RWPE1 (cell line): ENCODE measurements at regions of chr4 and their contacts with region 1.

Region 1: DNA sequence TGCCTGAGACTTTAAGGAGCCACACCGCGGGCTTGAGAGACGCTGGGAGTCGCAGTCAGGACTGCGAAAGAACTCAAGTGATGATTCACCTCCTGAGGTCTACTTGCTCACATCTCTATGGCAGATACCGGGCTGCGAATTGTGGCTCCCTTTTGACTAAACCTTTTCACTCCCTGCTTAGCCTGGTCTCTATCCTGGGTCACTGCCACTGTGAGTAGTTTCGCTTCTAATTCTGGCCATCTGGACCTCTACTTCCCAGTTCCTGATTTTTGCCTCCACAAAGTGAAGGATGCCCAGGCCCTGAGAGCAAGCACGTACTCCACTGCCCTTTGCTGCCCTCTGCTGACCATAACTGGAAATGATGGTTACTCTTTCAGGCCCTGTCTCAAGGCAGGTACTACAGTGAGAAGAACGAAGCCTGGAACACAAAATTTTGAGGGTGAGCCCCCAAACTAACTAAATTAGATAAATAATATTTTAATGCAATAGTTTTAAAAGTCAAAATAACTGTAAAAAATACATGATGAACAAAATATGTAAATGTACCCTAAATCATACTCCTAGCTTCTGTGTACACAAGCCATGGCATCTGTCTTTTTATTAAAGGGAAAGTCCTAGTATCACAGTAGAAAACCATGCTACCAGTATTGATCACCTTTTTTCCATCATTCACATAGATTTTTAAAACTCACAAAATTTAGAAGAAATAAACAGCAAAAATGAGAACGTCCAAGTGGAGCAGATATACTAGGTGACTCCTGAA is 16.7 kb downstream of the MAD2L1 start:
- DNase-seq: peak; percentile 50
- H3K27ac ChIP-seq: no peak overlapping the region
- CTCF ChIP-seq: peak; percentile 86

Region 2: DNA sequence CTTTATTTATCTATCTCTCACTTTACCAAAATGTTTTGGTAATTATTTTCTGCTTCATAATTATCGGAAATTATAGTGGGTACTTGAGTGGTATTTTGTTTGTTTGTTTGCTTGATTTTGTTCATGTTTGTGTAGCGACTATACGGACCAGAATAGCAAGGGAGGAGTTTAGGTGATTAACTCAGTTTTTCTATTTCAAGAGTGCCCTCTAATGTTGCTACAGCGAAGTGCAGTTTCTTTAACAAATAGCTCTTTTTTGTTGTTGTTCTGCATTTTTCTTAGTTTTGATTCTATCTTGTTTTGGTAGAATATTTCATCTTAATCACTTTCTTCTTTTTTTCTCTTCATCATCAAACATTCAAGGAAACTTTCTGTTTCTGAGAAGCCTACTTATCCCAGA is 1371.7 kb after region 1 on chr4:
- CTCF ChIA-PET with region 1: interaction called, 10 read pairs
- POLR2A ChIA-PET with region 1: no interaction called
- DNase-seq: no peak
- H3K27ac ChIP-seq: no peak overlapping the region
- CTCF ChIP-seq: no peak; the same call in 1 of the 2 replicates